Aorta (tissue), 5 donors: ENCODE measurements at regions of chr14 and their contacts with region 1.

Region 1: GRCh38 chr14:68771607-68772006 is 21.3 kb downstream of the ZFP36L1 start:
- DNase-seq: peak; percentile 47 to 60
- ATAC-seq: no peak
- H3K4me3 ChIP-seq: no peak overlapping the region
- H3K27ac ChIP-seq: no peak overlapping the region
- H3K4me1 ChIP-seq: no peaks in the 10 kb centered on the region
- H3K27me3 ChIP-seq: no peaks in the 10 kb centered on the region

Region 2: DNA sequence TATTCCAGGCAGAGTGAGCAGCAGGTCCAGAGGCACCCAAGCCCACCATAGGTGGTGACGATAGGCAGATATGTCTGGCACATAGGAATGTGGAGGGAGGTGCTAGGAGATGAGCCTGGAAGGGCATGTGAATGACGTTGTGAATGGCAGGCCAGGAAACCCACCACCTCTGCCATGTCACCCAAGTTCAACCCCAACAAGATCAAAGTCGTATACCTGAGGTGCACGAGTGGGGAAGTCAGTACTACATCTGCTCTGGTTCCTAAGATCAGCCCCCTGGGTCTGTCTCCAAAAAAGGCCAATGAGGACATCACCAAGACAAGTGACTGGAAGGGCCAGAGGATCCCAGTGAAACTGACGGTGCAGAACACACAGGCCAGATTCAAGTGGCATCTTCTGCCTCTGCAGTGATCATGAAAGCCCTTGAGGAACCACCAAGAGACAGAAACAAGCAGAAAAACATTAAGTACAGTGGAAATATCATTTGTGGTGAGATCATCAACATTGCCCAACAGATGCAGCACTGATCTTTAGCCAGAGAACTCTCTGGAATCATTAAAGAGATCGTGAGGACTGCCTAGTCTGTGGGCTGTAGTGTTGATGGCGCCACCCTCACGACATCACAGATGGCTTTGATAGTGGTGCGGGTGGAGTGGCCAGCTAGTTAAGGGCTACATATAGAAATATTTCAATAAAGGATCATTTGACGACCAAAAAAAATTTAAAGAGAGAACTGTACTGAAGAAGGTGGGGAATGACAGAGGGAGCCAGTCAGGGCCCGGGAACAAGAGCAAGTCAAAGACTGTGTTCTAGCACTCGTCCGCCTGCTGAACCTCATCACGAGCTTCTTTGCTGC is 78.5 kb before region 1 on chr14:
- intact Hi-C with region 1: loop called in 1 of 2 experiments (anchors 5 kb)
- DNase-seq: peak in 1 of 2 donors; percentile 36
- ATAC-seq: peak; percentile 54
- H3K4me3 ChIP-seq: no peak overlapping the region
- H3K27ac ChIP-seq: no peak overlapping the region
- H3K4me1 ChIP-seq: no peaks in the 10 kb centered on the region
- H3K27me3 ChIP-seq: no peaks in the 10 kb centered on the region

Region 3: DNA sequence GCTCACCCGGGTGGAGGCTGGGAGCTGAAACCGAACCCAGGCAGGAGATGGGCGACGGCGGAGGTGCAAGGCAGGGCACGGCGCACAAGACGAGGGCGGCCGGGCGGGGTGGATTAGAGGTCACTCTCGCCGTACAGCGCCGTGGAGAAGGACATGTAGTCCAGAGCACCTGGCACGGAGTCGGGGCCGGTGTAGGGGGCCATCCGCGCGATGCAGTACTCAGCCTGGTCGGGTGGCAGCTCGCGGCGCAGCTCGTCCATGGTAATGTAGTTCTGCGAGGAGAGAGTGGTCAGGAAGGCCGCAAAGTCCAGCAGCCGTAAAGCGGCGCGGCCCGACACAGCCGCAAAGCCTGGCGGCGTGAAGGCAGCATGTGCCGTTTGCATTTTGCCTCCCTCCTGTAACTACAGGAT is 103.1 kb after region 1 on chr14:
- intact Hi-C with region 1: no loop called
- DNase-seq: no peak
- ATAC-seq: no peak
- H3K4me3 ChIP-seq: no peak overlapping the region
- H3K27ac ChIP-seq: no peak overlapping the region
- H3K4me1 ChIP-seq: no peaks in the 10 kb centered on the region
- H3K27me3 ChIP-seq: no peaks in the 10 kb centered on the region